ENCODE measurements at regions of chr11 and their contacts with region 1.

Region 1: GRCh38 chr11:12235947-12236743 is 125.8 kb downstream of the MICAL2 start:
- DNase-seq: peak; percentile 89
- ATAC-seq: peak; percentile 86
- H3K4me3 Mint-ChIP-seq: peak overlapping the region; percentile 31
- H3K27ac Mint-ChIP-seq: peak overlapping the region; percentile 91
- H3K4me1 Mint-ChIP-seq: peaks cover 41% of the 10 kb centered on the region
- H3K27me3 Mint-ChIP-seq: no peaks in the 10 kb centered on the region

Region 2: GRCh38 chr11:12043959-12044819 is 192.0 kb before region 1 on chr11:
- CTCF ChIA-PET with region 1: interaction called, 34 read pairs
- DNase-seq: peak; percentile 75
- ATAC-seq: peak; percentile 76
- H3K4me3 Mint-ChIP-seq: no peak overlapping the region
- H3K27ac Mint-ChIP-seq: no peak overlapping the region
- H3K4me1 Mint-ChIP-seq: peaks cover 11% of the 10 kb centered on the region
- H3K27me3 Mint-ChIP-seq: peaks cover 17% of the 10 kb centered on the region

Region 3: GRCh38 chr11:12087075-12088004 is 148.8 kb before region 1 on chr11:
- CTCF ChIA-PET with region 1: interaction called, 68 read pairs
- DNase-seq: peak; percentile 87
- ATAC-seq: peak; percentile 92
- H3K4me3 Mint-ChIP-seq: peak overlapping the region; percentile 15
- H3K27ac Mint-ChIP-seq: peak overlapping the region; percentile 84
- H3K4me1 Mint-ChIP-seq: peaks cover 70% of the 10 kb centered on the region
- H3K27me3 Mint-ChIP-seq: peaks cover 2% of the 10 kb centered on the region

Region 4: DNA sequence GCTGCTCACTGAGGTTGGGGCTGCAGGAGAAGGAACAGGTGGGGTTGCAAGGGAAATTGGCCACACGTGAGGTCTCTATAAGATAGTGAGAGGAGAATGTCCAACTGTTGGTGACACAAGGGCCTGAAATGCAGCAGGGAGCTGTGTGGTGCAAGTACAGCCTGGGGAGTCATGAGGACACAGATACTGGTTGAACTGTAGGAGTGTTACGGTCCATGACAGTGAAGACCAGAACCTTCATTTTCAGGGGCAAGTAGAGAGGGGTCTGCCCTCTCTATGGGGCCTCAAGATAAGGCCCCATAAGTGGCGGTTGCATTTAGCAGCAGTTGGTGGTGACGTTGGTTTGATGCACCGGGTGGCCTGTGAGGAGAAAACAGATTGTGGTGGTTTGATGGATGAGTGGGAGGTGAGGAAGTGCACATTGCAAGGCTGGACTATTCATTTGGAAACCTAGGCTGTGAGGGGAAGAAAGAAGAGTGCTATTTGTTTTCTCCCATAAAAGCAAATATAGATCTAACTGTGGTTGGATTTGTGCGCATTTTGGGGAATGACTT is 86.4 kb before region 1 on chr11:
- CTCF ChIA-PET with region 1: interaction called, 11 read pairs
- DNase-seq: peak; percentile 78
- ATAC-seq: peak; percentile 50
- H3K4me3 Mint-ChIP-seq: peak overlapping the region; percentile 19
- H3K27ac Mint-ChIP-seq: peak overlapping the region; percentile 92
- H3K4me1 Mint-ChIP-seq: peaks cover 75% of the 10 kb centered on the region
- H3K27me3 Mint-ChIP-seq: no peaks in the 10 kb centered on the region

Region 5: GRCh38 chr11:12167098-12168000 is 68.8 kb before region 1 on chr11:
- CTCF ChIA-PET with region 1: interaction called, 19 read pairs
- DNase-seq: no peak
- ATAC-seq: peak; percentile 62
- H3K4me3 Mint-ChIP-seq: no peak overlapping the region
- H3K27ac Mint-ChIP-seq: peak overlapping the region; percentile 70
- H3K4me1 Mint-ChIP-seq: peaks cover 61% of the 10 kb centered on the region
- H3K27me3 Mint-ChIP-seq: no peaks in the 10 kb centered on the region

Region 6: GRCh38 chr11:12224537-12224893 is 11.6 kb before region 1 on chr11:
- CTCF ChIA-PET with region 1: interaction called, 69 read pairs
- DNase-seq: peak; percentile 98
- ATAC-seq: peak; percentile 94
- H3K4me3 Mint-ChIP-seq: peak overlapping the region; percentile 57
- H3K27ac Mint-ChIP-seq: peak overlapping the region; percentile 96
- H3K4me1 Mint-ChIP-seq: peaks cover 52% of the 10 kb centered on the region
- H3K27me3 Mint-ChIP-seq: no peaks in the 10 kb centered on the region

Region 7: GRCh38 chr11:12288212-12288930 is 52.2 kb after region 1 on chr11:
- CTCF ChIA-PET with region 1: interaction called, 12 read pairs
- DNase-seq: peak; percentile 67
- ATAC-seq: peak; percentile 62
- H3K4me3 Mint-ChIP-seq: no peak overlapping the region
- H3K27ac Mint-ChIP-seq: no peak overlapping the region
- H3K4me1 Mint-ChIP-seq: peaks cover 17% of the 10 kb centered on the region
- H3K27me3 Mint-ChIP-seq: no peaks in the 10 kb centered on the region

Region 8: GRCh38 chr11:12356944-12357650 is 121.0 kb after region 1 on chr11:
- CTCF ChIA-PET with region 1: no interaction called
- DNase-seq: no peak
- ATAC-seq: peak; percentile 58
- H3K4me3 Mint-ChIP-seq: no peak overlapping the region
- H3K27ac Mint-ChIP-seq: no peak overlapping the region
- H3K4me1 Mint-ChIP-seq: peaks cover 14% of the 10 kb centered on the region
- H3K27me3 Mint-ChIP-seq: peaks cover 2% of the 10 kb centered on the region